PC-9 (cell line): ENCODE measurements at regions of chr21 and their contacts with region 1.

Region 1: DNA sequence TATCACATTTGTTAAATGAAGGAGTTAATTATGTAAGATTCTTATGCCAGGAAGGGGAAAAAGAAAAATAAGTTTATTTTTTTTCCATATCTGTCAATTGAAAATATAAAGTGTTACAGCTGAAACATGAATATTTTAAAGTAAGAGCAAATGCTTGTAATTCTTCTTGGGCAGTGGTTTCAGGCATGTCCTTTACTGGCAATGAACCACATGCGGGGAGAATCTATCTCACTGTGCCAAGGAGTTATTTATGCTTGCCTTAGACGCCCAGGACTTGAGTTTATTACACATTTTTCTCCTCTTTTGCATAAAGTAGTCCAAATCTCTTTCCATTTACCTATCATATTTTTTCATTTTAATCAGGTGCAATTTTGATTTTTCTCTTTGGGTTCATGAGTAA is 207.8 kb upstream of the NRIP1 start:
- DNase-seq: peak in 1 of 2 experiments; percentile 10
- H3K4me3 ChIP-seq: no peak overlapping the region
- H3K27ac ChIP-seq: peak overlapping the region; percentile 45
- H3K4me1 ChIP-seq: peaks cover 40% of the 10 kb centered on the region
- H3K27me3 ChIP-seq: no peaks in the 10 kb centered on the region
- CTCF ChIP-seq: no peak

Region 2: GRCh38 chr21:15293240-15293639 is 20.6 kb after region 1 on chr21:
- CTCF ChIA-PET with region 1: no interaction called
- POLR2A ChIA-PET with region 1: no interaction called
- intact Hi-C with region 1: loop called (anchors 2 kb)
- DNase-seq: peak; percentile 43 to 85
- H3K4me3 ChIP-seq: no peak overlapping the region
- H3K27ac ChIP-seq: peak overlapping the region; percentile 56
- H3K4me1 ChIP-seq: peaks cover 30% of the 10 kb centered on the region
- H3K27me3 ChIP-seq: no peaks in the 10 kb centered on the region
- CTCF ChIP-seq: no peak